GM12878 (cell line): ENCODE measurements at regions of chr20 and their contacts with region 1.

Region 1: GRCh38 chr20:45771182-45771759 is 20.4 kb downstream of the WFDC3 start:
- DNase-seq: peak; percentile 48
- ATAC-seq: peak; percentile 88
- H3K4me3 ChIP-seq: no peak overlapping the region
- H3K27ac ChIP-seq: no peak overlapping the region
- H3K4me1 ChIP-seq: no peaks in the 10 kb centered on the region; the same call in 1 of the 2 replicates
- H3K27me3 ChIP-seq: no peaks in the 10 kb centered on the region
- CTCF ChIP-seq: peak; percentile 83 to 97 (median 92); a peak in 5 of 6 replicates
- EP300 ChIP-seq: no peak
- POLR2A ChIP-seq: no peak
- RAD21 ChIP-seq: peak; percentile 99

Region 2: GRCh38 chr20:45322952-45323383 is 448.3 kb before region 1 on chr20:
- CTCF ChIA-PET with region 1: interaction called, 44 read pairs
- POLR2A ChIA-PET with region 1: no interaction called
- RAD21 ChIA-PET with region 1: interaction called, 30 read pairs
- SMC1A ChIA-PET with region 1: interaction called, 13 read pairs
- in situ Hi-C with region 1: loop called (anchors 5 kb)
- intact Hi-C with region 1: loop called (anchors 2 kb)
- DNase-seq: no peak
- ATAC-seq: peak; percentile 66
- H3K4me3 ChIP-seq: no peak overlapping the region
- H3K27ac ChIP-seq: no peak overlapping the region
- H3K4me1 ChIP-seq: peaks cover 19% of the 10 kb centered on the region
- H3K27me3 ChIP-seq: no peaks in the 10 kb centered on the region; a peak in 1 of 4 replicates
- CTCF ChIP-seq: peak; percentile 12 to 56 (median 29); a peak in 3 of 6 replicates
- EP300 ChIP-seq: no peak
- POLR2A ChIP-seq: no peak
- RAD21 ChIP-seq: peak; percentile 45; the same call in 1 of the 2 replicates

Region 3: DNA sequence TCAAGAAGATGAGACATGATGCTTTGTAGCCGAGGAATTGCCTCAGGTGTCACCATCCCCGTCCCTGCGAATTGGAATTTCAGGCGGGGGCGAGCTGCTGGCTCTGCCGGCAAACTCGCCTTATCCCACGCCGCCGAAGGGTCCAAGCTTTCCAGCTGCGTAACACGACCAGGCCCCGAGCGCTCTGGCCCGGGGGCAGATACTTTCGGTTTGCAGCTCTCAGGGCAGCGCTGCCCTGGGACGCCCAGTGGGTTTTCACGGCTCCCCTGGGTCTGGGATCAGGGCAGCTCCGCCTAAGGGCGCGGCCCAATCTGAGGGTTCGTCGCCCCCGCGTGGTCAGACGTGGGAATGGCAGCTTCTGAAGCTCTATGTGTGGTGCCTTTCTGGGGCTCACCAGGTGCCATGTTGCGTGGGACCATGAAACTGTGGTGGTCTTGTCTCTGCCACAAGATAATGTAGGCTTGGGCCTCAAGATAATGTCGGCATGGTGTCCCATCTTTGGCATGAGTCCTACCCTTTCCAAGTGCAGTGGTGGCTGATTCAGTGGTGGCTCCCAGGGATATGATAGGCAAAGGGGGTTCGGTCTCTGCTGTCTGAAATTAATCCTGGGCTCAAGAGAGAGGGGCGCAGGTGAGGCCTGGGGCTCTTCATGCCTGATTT is 334.4 kb before region 1 on chr20:
- CTCF ChIA-PET with region 1: interaction called, 9 read pairs
- POLR2A ChIA-PET with region 1: no interaction called
- RAD21 ChIA-PET with region 1: interaction called, 16 read pairs
- SMC1A ChIA-PET with region 1: interaction called, 10 read pairs
- in situ Hi-C with region 1: no loop called
- intact Hi-C with region 1: no loop called
- DNase-seq: no peak
- ATAC-seq: peak; percentile 97
- H3K4me3 ChIP-seq: peak overlapping the region; percentile 39; the same call in 1 of the 2 replicates
- H3K27ac ChIP-seq: no peak overlapping the region
- H3K4me1 ChIP-seq: peaks cover 16% of the 10 kb centered on the region
- H3K27me3 ChIP-seq: no peaks in the 10 kb centered on the region
- CTCF ChIP-seq: peak; percentile 96 to 97 (median 96)
- EP300 ChIP-seq: no peak
- POLR2A ChIP-seq: no peak
- RAD21 ChIP-seq: peak; percentile 94

Region 4: DNA sequence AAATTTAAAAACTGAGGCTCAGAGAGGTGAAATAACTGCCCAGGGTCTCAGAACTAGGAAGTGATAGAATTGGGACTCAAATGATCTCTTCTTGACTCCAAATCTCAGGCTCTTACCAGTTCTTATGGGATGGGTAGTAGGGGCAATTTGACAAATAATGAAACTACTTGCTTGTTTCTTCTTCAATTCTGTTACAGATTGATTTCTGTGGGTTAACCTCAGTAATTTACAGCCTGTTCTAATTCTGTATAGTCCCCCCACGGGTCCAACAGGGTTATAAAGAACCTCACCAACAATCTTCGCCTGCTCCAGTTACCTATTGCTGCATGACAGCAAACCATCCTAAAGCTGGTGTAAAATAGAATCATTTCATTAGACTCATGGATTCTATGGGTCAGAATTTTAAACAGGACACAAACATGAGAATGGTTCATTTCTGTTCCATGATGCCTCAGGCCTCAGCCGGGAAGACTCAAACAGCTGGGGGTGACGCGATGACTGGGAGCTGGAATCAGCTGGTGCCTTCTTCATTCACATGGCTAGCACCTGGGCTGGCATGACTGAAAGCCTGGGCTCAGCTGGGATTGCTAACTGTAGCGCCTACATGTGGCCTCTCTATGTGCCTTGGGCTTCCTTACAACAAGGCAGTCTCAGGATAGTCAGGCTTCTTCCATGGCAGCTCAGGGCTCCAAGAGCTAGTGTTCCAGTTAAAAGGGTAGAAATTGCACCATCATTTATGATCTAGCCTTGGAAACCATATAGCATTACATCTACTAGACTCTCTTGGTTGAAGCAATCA is 308.4 kb before region 1 on chr20:
- CTCF ChIA-PET with region 1: interaction called, 18 read pairs
- POLR2A ChIA-PET with region 1: interaction called, 5 read pairs
- RAD21 ChIA-PET with region 1: interaction called, 7 read pairs
- SMC1A ChIA-PET with region 1: interaction called, 9 read pairs
- in situ Hi-C with region 1: loop called (anchors 5 kb)
- intact Hi-C with region 1: no loop called
- DNase-seq: no peak
- ATAC-seq: no peak
- H3K4me3 ChIP-seq: no peak overlapping the region
- H3K27ac ChIP-seq: no peak overlapping the region
- H3K4me1 ChIP-seq: no peaks in the 10 kb centered on the region
- H3K27me3 ChIP-seq: peaks cover 0 to 19% of the 10 kb centered on the region in 2 experiments; a peak in 3 of 4 replicates
- CTCF ChIP-seq: no peak
- EP300 ChIP-seq: no peak
- POLR2A ChIP-seq: no peak
- RAD21 ChIP-seq: no peak

Region 5: GRCh38 chr20:45629496-45630100 is 141.7 kb before region 1 on chr20 and contains the start of gene WFDC10A:
- CTCF ChIA-PET with region 1: interaction called, 26 read pairs
- POLR2A ChIA-PET with region 1: no interaction called
- RAD21 ChIA-PET with region 1: interaction called, 3 read pairs
- SMC1A ChIA-PET with region 1: interaction called, 18 read pairs
- in situ Hi-C with region 1: no loop called
- intact Hi-C with region 1: loop called (anchors 10 kb)
- DNase-seq: no peak
- ATAC-seq: peak; percentile 90
- H3K4me3 ChIP-seq: no peak within 1 kb of the TSS
- H3K27ac ChIP-seq: no peak within 1 kb of the TSS
- H3K4me1 ChIP-seq: no peaks in the 10 kb centered on the region
- H3K27me3 ChIP-seq: no peaks in the 10 kb centered on the region; a peak in 1 of 4 replicates
- CTCF ChIP-seq: peak; percentile 63 to 80 (median 71)
- EP300 ChIP-seq: no peak
- POLR2A ChIP-seq: no peak
- RAD21 ChIP-seq: peak; percentile 36
- polyA plus RNA-seq, gene WFDC10A: not detected

Region 6: GRCh38 chr20:45798935-45799642 is 27.8 kb after region 1 on chr20:
- CTCF ChIA-PET with region 1: interaction called, 11 read pairs
- POLR2A ChIA-PET with region 1: interaction called, 4 read pairs
- RAD21 ChIA-PET with region 1: interaction called, 3 read pairs
- SMC1A ChIA-PET with region 1: interaction called, 3 read pairs
- in situ Hi-C with region 1: no loop called
- intact Hi-C with region 1: no loop called
- DNase-seq: no peak
- ATAC-seq: peak; percentile 99
- H3K4me3 ChIP-seq: no peak overlapping the region
- H3K27ac ChIP-seq: no peak overlapping the region
- H3K4me1 ChIP-seq: no peaks in the 10 kb centered on the region
- H3K27me3 ChIP-seq: no peaks in the 10 kb centered on the region
- CTCF ChIP-seq: peak; percentile 69 to 78 (median 73)
- EP300 ChIP-seq: no peak
- POLR2A ChIP-seq: no peak
- RAD21 ChIP-seq: peak; percentile 66

Region 7: DNA sequence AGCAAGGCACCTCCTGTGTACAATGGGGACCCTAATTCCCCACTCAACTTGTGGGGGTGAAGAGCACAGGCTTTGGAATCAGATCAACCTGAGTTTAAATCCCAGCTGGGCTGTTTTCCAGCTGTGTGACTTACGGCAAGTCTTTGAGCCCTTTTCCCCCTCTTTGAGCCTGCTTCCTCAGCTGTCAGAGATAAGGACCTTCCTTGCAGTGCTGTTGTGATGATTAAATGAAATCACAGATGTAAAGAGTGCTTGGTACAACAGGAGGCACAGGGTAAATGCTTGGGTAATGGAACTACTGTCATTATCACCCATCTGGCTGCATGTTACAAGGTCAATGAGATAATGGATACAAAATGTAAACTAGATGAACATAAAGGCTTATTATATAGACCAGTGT is 65.6 kb after region 1 on chr20:
- CTCF ChIA-PET with region 1: no interaction called
- POLR2A ChIA-PET with region 1: no interaction called
- RAD21 ChIA-PET with region 1: no interaction called
- SMC1A ChIA-PET with region 1: no interaction called
- in situ Hi-C with region 1: no loop called
- intact Hi-C with region 1: no loop called
- DNase-seq: no peak
- ATAC-seq: no peak
- H3K4me3 ChIP-seq: no peak overlapping the region
- H3K27ac ChIP-seq: no peak overlapping the region
- H3K4me1 ChIP-seq: peaks cover 5% of the 10 kb centered on the region
- H3K27me3 ChIP-seq: no peaks in the 10 kb centered on the region
- CTCF ChIP-seq: no peak
- EP300 ChIP-seq: no peak
- POLR2A ChIP-seq: no peak
- RAD21 ChIP-seq: no peak